ENCODE measurements at regions of chr11 and their contacts with region 1.

Region 1: DNA sequence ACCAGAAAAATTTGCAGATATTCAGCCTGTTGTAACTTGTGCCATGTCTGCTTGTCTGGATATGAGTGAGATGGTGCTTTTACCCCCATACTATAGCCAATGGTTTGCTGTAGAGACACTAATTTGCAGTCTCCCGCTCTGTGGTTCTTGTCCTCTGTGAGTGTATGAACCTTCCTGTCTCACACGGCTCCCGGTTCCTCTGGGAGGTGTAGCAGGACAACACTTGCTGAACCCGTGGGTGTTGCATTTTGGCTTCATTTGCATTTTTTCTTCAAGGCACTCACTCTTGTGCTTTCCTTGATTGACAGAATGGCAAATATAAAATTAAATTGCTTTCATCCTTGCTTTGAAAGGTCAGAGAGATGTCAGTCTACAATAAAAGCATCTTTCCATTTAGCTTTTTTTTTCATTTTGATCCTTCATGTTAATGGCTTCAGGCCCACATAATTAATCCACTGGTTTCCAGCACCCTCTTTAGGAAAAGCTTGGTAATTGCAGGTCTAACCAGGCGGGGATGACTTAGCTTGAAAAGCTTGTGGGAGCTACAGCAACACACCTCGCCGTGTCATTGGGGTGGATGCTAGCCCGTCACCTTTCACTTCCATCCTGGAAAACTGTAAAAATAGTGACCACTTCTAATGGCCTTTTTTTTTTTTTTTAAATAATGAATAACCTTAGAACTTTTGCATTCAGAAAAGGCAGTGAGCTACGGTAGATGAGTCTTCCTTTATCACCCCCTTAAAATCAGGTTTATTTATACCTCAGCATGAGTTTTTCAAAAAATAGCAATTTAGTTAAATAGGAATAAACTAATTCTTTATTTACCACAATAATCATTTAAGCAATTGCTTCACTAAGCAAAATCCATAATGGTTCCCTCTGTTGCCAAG is 27.4 kb upstream of the ST14 start:
- DNase-seq: no peak
- ATAC-seq: peak; percentile 77

Region 2: DNA sequence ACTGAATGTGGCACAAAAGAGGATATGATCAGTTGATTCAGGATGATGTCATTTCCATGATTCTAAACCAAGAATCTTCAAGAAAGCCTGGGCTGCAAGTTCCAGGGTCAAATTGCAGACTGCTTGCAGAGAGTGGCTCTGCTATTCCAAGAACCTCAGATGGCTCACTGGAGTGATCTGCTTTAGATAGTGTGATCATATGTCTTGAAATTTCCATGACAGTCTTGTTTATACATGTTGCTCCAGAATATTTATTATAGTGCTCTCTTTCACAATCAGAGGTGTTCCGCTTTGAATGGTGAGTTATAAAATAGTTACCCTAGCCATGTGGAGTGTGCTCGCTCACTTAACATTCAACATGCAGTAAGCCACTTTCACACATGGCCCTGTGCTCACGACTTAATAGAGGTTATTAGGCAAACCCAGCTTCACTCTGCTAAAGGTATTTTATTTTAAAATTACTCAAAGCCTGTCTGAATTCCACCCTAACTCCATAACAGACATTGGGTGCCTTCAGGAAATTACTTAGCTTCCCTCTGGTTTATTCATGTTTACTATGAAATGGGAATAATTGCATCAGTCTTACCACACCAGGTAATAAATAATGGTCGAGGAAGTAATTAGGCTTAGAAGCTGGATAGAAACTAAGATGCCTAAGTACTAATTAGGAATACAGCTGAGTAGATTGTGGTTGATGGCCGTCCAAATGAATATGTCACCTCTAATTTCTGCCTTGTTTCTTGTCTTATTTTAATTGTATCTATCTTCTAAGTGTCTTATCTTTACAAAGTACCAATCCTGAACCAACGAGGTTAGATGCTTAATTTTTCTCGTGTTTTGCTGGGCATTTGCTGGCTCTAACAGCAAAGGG is 1732.7 kb before region 1 on chr11:
- intact Hi-C with region 1: no loop called
- DNase-seq: no peak
- ATAC-seq: no peak

Region 3: GRCh38 chr11:129922674-129923073 is 209.5 kb before region 1 on chr11:
- intact Hi-C with region 1: loop called (anchors 2 kb)
- DNase-seq: no peak
- ATAC-seq: no peak

Region 4: GRCh38 chr11:130300567-130300966 is 168.4 kb after region 1 on chr11:
- intact Hi-C with region 1: no loop called
- DNase-seq: no peak
- ATAC-seq: no peak